Naive thymus-derived CD4-positive, alpha-beta T cell (primary cell): ENCODE measurements at regions of chr7 and their contacts with region 1.

Region 1: GRCh38 chr7:27921081-27921836 is 181.3 kb downstream of the TAX1BP1 start:
- DNase-seq: peak in 6 of 9 donors; percentile 17 to 59 (median 44)
- ATAC-seq: peak; percentile 67
- H3K4me3 ChIP-seq: no peak overlapping the region
- H3K4me3 Mint-ChIP-seq: no peak overlapping the region
- H3K27ac ChIP-seq: no peak overlapping the region
- H3K27ac Mint-ChIP-seq: peak overlapping the region in 1 of 9 donors; percentile 11
- H3K4me1 ChIP-seq: no peaks in the 10 kb centered on the region
- H3K4me1 Mint-ChIP-seq: peaks cover 0 to 11% (median 1%) of the 10 kb centered on the region in 7 donors
- H3K27me3 ChIP-seq: no peaks in the 10 kb centered on the region
- H3K27me3 Mint-ChIP-seq: no peaks in the 10 kb centered on the region

Region 2: DNA sequence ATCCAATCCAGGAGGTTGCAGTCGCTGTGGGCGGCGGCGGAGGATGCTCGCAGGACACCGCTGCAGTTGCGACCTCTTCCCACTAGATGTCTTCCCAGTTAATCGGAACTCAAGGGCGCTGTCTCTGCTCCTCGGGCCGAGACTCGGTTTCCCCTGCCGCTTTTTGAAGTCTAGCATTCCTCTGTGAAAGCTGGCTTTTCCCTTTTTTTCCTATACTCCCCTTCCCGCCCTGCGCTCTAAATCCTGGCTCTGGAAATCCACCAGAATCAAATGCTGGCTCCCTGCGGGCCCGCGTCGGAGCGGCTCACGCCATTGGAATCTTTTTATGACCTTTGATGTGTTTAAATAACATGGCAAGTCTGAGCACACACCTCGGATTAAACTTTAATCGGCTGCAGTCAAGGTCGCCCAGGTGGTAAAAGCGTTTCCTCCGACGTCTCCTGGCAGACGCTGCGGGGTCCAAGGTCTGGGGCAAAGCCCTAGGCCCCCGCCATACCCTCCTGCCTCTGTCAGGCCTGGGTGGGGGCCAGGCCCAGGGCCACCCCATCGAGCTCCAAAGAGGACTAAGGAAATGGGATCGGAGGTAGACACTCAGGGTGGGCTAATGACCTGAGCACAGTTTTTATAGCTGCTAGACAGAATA is 710.7 kb before region 1 on chr7:
- CTCF ChIA-PET with region 1: no interaction called
- POLR2A ChIA-PET with region 1: no interaction called
- intact Hi-C with region 1: loop called (anchors 5 kb)
- DNase-seq: peak in 2 of 9 donors; percentile 28 to 47
- ATAC-seq: peak; percentile 74
- H3K4me3 ChIP-seq: no peak overlapping the region
- H3K4me3 Mint-ChIP-seq: peak overlapping the region; percentile 35 to 79 (median 66)
- H3K27ac ChIP-seq: no peak overlapping the region
- H3K27ac Mint-ChIP-seq: no peak overlapping the region
- H3K4me1 ChIP-seq: peaks cover 4 to 7% of the 10 kb centered on the region in 2 donors
- H3K4me1 Mint-ChIP-seq: peaks cover 0 to 29% (median 18%) of the 10 kb centered on the region in 7 donors
- H3K27me3 ChIP-seq: peaks cover 21 to 64% of the 10 kb centered on the region in 2 donors
- H3K27me3 Mint-ChIP-seq: peaks cover 80 to 97% (median 93%) of the 10 kb centered on the region in 5 donors

Region 3: GRCh38 chr7:27689591-27690164 is 231.6 kb before region 1 on chr7:
- CTCF ChIA-PET with region 1: no interaction called
- POLR2A ChIA-PET with region 1: no interaction called
- intact Hi-C with region 1: loop called in 1 of 2 experiments (anchors 5 kb)
- DNase-seq: peak in 3 of 9 donors; percentile 3 to 8 (median 7)
- ATAC-seq: peak; percentile 42
- H3K4me3 ChIP-seq: no peak overlapping the region
- H3K4me3 Mint-ChIP-seq: no peak overlapping the region
- H3K27ac ChIP-seq: no peak overlapping the region
- H3K27ac Mint-ChIP-seq: no peak overlapping the region
- H3K4me1 ChIP-seq: no peaks in the 10 kb centered on the region
- H3K4me1 Mint-ChIP-seq: no peaks in the 10 kb centered on the region
- H3K27me3 ChIP-seq: peaks cover 0 to 2% of the 10 kb centered on the region in 2 donors
- H3K27me3 Mint-ChIP-seq: peaks cover 0 to 12% (median 12%) of the 10 kb centered on the region in 5 donors

Region 4: GRCh38 chr7:27745064-27745583 is 176.1 kb before region 1 on chr7:
- CTCF ChIA-PET with region 1: no interaction called
- POLR2A ChIA-PET with region 1: no interaction called
- intact Hi-C with region 1: loop called in 1 of 2 experiments (anchors 1 kb)
- DNase-seq: peak in 4 of 9 donors; percentile 5 to 14 (median 9)
- ATAC-seq: no peak
- H3K4me3 ChIP-seq: no peak overlapping the region
- H3K4me3 Mint-ChIP-seq: peak overlapping the region in 5 of 10 donors; percentile 26 to 58 (median 54)
- H3K27ac ChIP-seq: no peak overlapping the region
- H3K27ac Mint-ChIP-seq: no peak overlapping the region
- H3K4me1 ChIP-seq: peaks cover 18 to 23% of the 10 kb centered on the region in 2 donors
- H3K4me1 Mint-ChIP-seq: peaks cover 35 to 81% (median 66%) of the 10 kb centered on the region in 7 donors
- H3K27me3 ChIP-seq: no peaks in the 10 kb centered on the region
- H3K27me3 Mint-ChIP-seq: no peaks in the 10 kb centered on the region

Region 5: GRCh38 chr7:27952456-27953285 is 31.4 kb after region 1 on chr7:
- CTCF ChIA-PET with region 1: no interaction called
- POLR2A ChIA-PET with region 1: no interaction called
- intact Hi-C with region 1: loop called in 1 of 2 experiments (anchors 2 kb)
- DNase-seq: peak in 6 of 9 donors; percentile 10 to 65 (median 44)
- ATAC-seq: peak; percentile 74
- H3K4me3 ChIP-seq: no peak overlapping the region
- H3K4me3 Mint-ChIP-seq: peak overlapping the region in 9 of 10 donors; percentile 55 to 85 (median 70)
- H3K27ac ChIP-seq: peak overlapping the region; percentile 39
- H3K27ac Mint-ChIP-seq: peak overlapping the region in 8 of 9 donors; percentile 34 to 95 (median 88)
- H3K4me1 ChIP-seq: peaks cover 0 to 32% of the 10 kb centered on the region in 2 donors
- H3K4me1 Mint-ChIP-seq: peaks cover 10 to 64% (median 49%) of the 10 kb centered on the region in 7 donors
- H3K27me3 ChIP-seq: no peaks in the 10 kb centered on the region
- H3K27me3 Mint-ChIP-seq: peaks cover 0 to 4% (median 0%) of the 10 kb centered on the region in 5 donors